ENCODE measurements at regions of chr17 and their contacts with region 1.

Region 1: DNA sequence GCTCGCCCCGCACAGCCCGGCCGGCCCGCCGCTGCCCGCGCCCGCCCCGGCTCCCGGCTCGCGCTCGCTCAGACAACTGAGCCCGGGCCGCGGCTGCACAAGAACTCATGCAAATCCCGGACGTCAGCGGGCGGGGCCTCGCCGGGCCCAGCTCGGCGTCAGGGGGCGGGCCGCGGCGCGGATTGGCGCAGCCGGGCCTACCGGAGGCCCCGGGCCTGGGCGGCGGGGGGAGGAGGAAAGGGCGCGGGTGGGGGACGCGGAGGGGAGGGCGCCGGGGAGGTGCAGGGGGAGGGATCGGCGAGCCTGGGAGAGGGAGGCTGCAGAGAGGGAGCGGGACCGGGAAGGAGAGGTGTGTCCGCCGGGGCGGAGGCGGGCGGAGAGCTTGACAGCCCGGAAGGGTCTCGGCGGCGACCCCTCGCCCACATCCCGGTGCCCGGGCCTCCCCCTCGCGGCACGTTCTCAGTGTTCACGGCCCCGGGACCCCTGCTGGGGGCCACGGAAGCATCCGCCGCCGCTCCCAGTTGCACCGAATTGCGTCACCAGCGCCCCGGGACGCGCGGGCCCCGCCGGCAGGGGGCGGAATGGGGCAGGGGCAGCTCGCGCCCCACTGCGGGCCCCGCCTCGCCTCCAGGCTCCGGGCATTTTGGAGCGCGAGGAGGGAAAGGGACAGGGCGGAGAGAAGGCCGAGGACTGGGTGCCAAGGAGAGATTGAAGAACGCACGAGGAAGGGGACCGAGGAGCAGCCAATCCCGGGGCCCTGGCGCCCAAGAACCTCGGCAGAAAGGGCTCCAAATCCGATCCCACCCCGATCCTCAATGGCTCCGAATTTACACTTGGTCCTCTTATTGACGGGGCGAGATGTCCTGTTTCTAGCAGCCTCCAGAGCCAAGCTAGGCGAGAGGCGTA is at the start of gene CBX4:
- DNase-seq: peak; percentile 48
- H3K4me3 ChIP-seq: peak within 1 kb of the TSS; percentile 65
- H3K27me3 ChIP-seq: peaks cover 25% of the 10 kb centered on the region
- CTCF ChIP-seq: peak; percentile 53
- polyA plus RNA-seq, gene CBX4: 8.0 and 10.4 TPM in 2 replicates

Region 2: GRCh38 chr17:79796763-79797491 is 42.7 kb before region 1 on chr17 and contains the start of gene CBX8:
- CTCF ChIA-PET with region 1: interaction called, 13 read pairs
- POLR2A ChIA-PET with region 1: interaction called, 9 read pairs
- DNase-seq: peak; percentile 91
- H3K4me3 ChIP-seq: peak within 1 kb of the TSS; percentile 78
- H3K27me3 ChIP-seq: peaks cover 32% of the 10 kb centered on the region
- CTCF ChIP-seq: 0 out of 2 replicates have a peak, but pooled peaks have one; percentile 14
- polyA plus RNA-seq, gene CBX8: 0.32 and 0.47 TPM in 2 replicates

Region 3: GRCh38 chr17:79810130-79811010 is 29.2 kb before region 1 on chr17:
- CTCF ChIA-PET with region 1: interaction called, 26 read pairs
- POLR2A ChIA-PET with region 1: interaction called, 3 read pairs
- DNase-seq: no peak
- H3K4me3 ChIP-seq: no peak overlapping the region
- H3K27me3 ChIP-seq: peaks cover 74% of the 10 kb centered on the region
- CTCF ChIP-seq: no peak

Region 4: GRCh38 chr17:79818026-79818758 is 21.4 kb before region 1 on chr17:
- CTCF ChIA-PET with region 1: interaction called, 39 read pairs
- POLR2A ChIA-PET with region 1: interaction called, 5 read pairs
- DNase-seq: no peak
- H3K4me3 ChIP-seq: no peak overlapping the region
- H3K27me3 ChIP-seq: peaks cover 53% of the 10 kb centered on the region
- CTCF ChIP-seq: no peak

Region 5: GRCh38 chr17:80071116-80071980 is 231.7 kb after region 1 on chr17:
- CTCF ChIA-PET with region 1: no interaction called
- POLR2A ChIA-PET with region 1: no interaction called
- DNase-seq: no peak
- H3K4me3 ChIP-seq: no peak overlapping the region
- H3K27me3 ChIP-seq: no peaks in the 10 kb centered on the region
- CTCF ChIP-seq: no peak